PC-9 (cell line): ENCODE measurements at regions of chr9 and their contacts with region 1.

Region 1: DNA sequence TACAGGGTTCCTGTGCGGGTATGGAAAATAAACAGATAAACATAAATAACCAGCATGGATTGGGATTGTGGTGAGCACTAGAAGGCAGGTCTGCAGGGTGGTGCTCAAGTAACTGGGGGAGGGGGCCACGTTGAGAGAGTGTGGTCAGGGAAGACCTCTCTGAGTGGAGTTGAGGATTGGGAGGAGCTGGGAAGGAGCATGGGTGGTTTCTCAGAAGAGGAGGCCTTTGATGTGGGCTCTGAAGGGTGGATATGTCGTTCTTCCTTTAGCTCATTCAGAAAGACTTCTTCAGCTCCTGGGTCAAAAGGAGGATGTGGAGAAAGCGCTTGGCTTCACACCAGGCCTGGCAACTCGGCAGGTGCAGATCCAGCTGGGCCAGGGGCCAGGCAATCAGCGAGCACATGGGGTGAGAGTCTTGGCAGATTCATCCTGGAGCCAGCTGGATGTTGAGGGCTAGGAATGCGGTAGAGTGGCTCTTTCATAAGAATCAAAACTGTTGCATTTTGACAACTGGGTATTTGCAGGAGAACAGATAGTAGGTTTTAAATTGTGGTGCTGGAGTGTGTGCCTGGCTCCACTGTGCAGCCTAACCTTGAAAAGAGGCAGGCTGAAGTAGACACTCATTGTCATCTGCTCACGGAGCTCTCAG is 71.7 kb downstream of the PCSK5 start:
- DNase-seq: peak; percentile 64 to 88
- H3K4me3 ChIP-seq: no peak overlapping the region
- H3K27ac ChIP-seq: peak overlapping the region; percentile 81
- H3K4me1 ChIP-seq: peaks cover 42% of the 10 kb centered on the region
- H3K27me3 ChIP-seq: no peaks in the 10 kb centered on the region
- CTCF ChIP-seq: no peak

Region 2: DNA sequence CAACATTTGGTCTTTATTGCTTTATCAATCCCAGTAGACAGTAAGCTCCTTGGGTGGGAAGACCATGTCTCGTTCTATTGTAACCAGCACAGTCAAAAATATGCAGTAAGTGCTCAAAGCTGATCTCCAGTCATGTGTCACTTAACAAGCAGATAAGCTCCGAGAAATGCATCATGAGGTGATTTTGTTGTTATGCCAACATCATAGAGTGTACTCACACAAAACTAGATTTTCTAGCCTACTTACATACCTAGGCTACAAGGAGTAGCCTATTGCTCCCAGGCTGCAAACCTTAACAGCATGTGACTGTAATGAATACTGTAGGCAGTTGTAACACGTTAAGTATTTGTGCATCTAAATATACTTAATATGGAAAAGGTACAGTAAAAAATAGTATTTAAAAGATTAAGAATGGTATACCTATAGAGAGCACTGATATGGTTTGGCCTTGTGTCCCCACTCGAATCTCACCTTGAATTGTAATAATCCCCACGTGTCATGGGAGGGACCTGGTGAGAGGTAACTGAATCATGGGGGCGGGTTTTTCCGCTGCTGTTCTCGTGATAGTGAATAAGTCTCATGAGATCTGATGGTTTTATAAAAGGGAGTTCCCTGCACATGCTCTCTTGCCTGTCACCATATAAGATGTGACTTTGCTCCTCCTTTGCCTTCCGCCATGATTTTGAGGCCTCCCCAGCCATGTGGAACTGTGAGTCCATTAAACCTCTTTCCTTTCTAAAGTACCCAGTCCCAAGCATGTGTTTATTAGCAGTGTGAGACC is 111.5 kb before region 1 on chr9:
- CTCF ChIA-PET with region 1: no interaction called
- POLR2A ChIA-PET with region 1: interaction called, 11 read pairs
- intact Hi-C with region 1: no loop called
- DNase-seq: no peak
- H3K4me3 ChIP-seq: no peak overlapping the region
- H3K27ac ChIP-seq: no peak overlapping the region
- H3K4me1 ChIP-seq: no peaks in the 10 kb centered on the region
- H3K27me3 ChIP-seq: no peaks in the 10 kb centered on the region
- CTCF ChIP-seq: no peak

Region 3: DNA sequence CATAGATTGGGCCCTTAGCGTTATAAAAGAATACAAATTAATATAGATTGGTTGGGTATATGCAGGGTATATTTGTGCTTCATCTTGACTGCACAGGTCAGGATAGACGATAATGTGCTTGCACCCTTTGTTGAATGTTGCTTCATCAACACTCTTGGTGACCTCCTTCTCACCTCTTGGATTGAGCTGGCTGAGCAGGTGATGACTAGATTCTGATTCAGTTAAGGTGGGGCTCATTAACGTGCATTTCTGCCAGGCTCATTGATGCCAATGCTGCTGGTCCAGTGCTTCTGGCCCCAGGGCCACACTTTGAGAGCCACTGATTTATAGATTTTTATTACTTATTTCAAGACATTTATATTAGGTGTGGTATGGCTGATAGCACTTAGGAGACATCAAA is 44.0 kb before region 1 on chr9:
- CTCF ChIA-PET with region 1: no interaction called
- POLR2A ChIA-PET with region 1: no interaction called
- intact Hi-C with region 1: loop called (anchors 1 kb)
- DNase-seq: peak; percentile 41 to 90
- H3K4me3 ChIP-seq: no peak overlapping the region
- H3K27ac ChIP-seq: peak overlapping the region; percentile 53
- H3K4me1 ChIP-seq: peaks cover 28% of the 10 kb centered on the region
- H3K27me3 ChIP-seq: no peaks in the 10 kb centered on the region
- CTCF ChIP-seq: no peak

Region 4: DNA sequence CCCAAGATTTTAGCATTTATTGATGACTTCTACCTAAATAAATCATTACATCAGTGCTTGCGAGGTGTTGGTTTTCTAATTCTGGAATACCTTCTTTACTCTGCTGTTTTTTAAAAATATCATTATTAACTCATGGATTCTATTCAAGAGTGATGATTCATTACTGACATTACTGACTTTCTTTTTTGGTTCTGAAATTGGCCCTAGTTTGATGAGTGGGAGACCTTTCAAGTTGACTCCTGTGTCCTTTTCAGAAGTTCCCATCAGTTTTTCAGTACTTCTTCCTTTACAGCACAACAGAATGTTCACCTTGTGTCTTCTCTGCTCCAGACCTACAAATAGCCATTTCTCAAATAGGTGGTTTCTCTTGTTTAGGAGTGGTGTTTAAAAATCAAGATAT is 42.4 kb after region 1 on chr9:
- CTCF ChIA-PET with region 1: no interaction called
- POLR2A ChIA-PET with region 1: no interaction called
- intact Hi-C with region 1: no loop called
- DNase-seq: no peak
- H3K4me3 ChIP-seq: no peak overlapping the region
- H3K27ac ChIP-seq: no peak overlapping the region
- H3K4me1 ChIP-seq: no peaks in the 10 kb centered on the region
- H3K27me3 ChIP-seq: no peaks in the 10 kb centered on the region
- CTCF ChIP-seq: no peak

Region 5: GRCh38 chr9:76216161-76216649 is 254.1 kb after region 1 on chr9:
- CTCF ChIA-PET with region 1: no interaction called
- POLR2A ChIA-PET with region 1: no interaction called
- intact Hi-C with region 1: loop called (anchors 5 kb)
- DNase-seq: peak in 1 of 2 experiments; percentile 97
- H3K4me3 ChIP-seq: no peak overlapping the region
- H3K27ac ChIP-seq: peak overlapping the region; percentile 86
- H3K4me1 ChIP-seq: peaks cover 42% of the 10 kb centered on the region
- H3K27me3 ChIP-seq: no peaks in the 10 kb centered on the region
- CTCF ChIP-seq: no peak

Region 6: GRCh38 chr9:77779010-77779409 is 1816.9 kb after region 1 on chr9:
- CTCF ChIA-PET with region 1: interaction called, 20 read pairs
- POLR2A ChIA-PET with region 1: no interaction called
- intact Hi-C with region 1: no loop called
- DNase-seq: no peak
- H3K4me3 ChIP-seq: no peak overlapping the region
- H3K27ac ChIP-seq: no peak overlapping the region
- H3K4me1 ChIP-seq: no peaks in the 10 kb centered on the region
- H3K27me3 ChIP-seq: no peaks in the 10 kb centered on the region
- CTCF ChIP-seq: no peak